Activated T-helper 2 cell treated with anti-CD3 and anti-CD28 coated beads, Interferon-gamma antibody, Interleukin-2, Interleukin-4, amounts not matched to agents 10 μg/mL and 5 μg/mL and 100 μg/mL, durations not matched to agents 14 hours and 24 hours and 36 hours (primary cell): ENCODE measurements at regions of chr1 and their contacts with region 1.

Region 1: GRCh38 chr1:166379447-166379846 is 212.6 kb upstream of the FAM78B start:
- DNase-seq: no peak
- H3K4me3 Mint-ChIP-seq: no peak overlapping the region
- H3K27ac Mint-ChIP-seq: no peak overlapping the region
- H3K4me1 Mint-ChIP-seq: peaks cover 4% of the 10 kb centered on the region
- H3K27me3 Mint-ChIP-seq: no peaks in the 10 kb centered on the region

Region 2: GRCh38 chr1:165639821-165640623 is 739.4 kb before region 1 on chr1:
- intact Hi-C with region 1: loop called (anchors 5 kb)
- DNase-seq: peak; percentile 14
- H3K4me3 Mint-ChIP-seq: peak overlapping the region; percentile 11
- H3K27ac Mint-ChIP-seq: peak overlapping the region; percentile 66
- H3K4me1 Mint-ChIP-seq: peaks cover 52% of the 10 kb centered on the region
- H3K27me3 Mint-ChIP-seq: no peaks in the 10 kb centered on the region